ENCODE measurements at regions of chr7 and their contacts with region 1.

Region 1: DNA sequence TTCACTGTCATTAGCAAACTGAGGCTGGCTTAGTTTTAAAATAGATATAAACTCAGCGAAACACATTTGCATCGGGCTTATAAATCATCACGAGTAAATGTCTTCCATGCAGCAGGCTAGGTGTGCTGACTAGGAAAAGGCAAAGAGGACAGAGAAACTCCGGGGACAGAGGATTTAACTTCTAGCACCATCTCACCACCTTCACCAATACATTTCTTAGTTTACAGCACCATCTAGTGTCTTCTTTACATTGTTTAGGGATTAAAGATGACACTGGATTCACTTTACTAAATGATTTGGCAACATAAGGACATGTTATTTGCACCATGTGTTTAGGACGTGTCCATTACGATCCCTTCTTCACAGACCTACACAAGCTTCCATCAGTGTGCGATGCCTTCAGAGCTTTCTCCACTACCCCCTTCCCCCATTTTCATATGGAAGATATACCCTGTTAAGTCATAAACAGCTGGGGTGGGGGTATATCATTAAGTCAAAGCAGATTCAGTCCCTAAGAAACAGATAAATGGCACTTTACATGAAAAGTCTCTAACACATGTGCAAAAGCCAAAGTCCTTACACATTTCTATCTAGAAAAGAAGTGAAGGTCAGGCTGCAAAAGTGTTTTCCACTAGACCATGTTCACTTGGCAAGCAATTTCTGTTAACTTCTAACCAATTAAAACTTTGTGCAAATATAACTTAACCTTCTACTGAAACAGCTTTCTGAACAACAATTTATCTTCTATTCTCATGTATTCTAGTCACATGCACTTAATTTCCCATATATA is 103.3 kb downstream of the GRB10 start:
- DNase-seq: no peak
- ATAC-seq: peak; percentile 85 to 88
- H3K4me3 ChIP-seq: no peak overlapping the region
- H3K27ac ChIP-seq: peak overlapping the region; percentile 73 to 97 (median 84)
- H3K4me1 ChIP-seq: peaks cover 73 to 79% of the 10 kb centered on the region in 2 donors
- H3K27me3 ChIP-seq: no peaks in the 10 kb centered on the region
- CTCF ChIP-seq: peak; percentile 41 to 68 (median 48)
- POLR2A ChIP-seq: peak; percentile 16 to 44

Region 2: DNA sequence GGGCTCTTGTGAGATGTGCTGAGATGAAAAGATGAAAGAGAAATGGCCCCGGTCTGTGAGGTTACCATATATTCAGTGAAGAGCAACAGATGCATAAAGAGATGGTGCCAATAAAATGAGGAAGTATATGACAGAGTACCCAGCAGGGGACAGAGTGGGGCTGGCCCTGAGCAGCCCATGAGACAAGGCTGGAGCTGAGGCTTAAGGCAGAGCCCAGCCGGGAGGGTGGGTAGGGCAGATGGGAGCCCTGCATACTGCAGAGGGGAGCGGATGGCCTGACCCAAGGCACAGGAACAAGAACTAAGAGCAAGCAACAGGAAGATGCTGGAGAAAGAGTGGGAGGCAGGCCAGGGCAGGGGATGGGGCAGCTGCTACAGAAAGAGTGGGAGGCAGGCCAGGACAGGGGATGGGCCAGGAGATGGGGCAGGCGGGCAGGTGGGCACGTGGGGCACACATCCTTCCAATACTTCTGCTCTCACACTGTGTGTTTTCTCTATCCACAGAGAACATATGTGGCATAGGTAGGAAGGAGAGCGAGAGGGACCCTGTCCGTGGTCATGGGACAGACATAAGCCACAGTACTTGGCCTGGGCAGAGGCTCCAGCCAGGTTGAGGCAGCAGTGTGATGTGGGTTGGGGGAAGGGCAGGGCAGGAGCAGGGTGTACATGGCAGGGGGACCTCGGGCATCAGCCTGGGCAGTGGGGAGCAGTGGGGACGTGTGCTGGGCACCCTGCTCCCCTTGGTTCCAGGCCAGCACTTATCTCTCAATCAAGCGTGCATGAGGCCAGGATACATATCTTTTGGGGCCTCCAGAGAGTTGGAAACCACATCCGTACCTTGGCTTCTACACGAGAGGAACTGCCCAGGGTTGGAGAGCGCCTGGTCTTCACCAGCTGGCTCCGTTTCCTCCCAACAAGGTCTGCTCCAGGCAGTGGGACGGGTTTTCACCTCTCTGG is 466.5 kb before region 1 on chr7:
- in situ Hi-C with region 1: loop called in 2 of 4 experiments (anchors 10 to 25 kb)
- intact Hi-C with region 1: no loop called
- DNase-seq: no peak
- ATAC-seq: no peak
- H3K4me3 ChIP-seq: no peak overlapping the region
- H3K27ac ChIP-seq: no peak overlapping the region
- H3K4me1 ChIP-seq: no peaks in the 10 kb centered on the region
- H3K27me3 ChIP-seq: no peaks in the 10 kb centered on the region
- CTCF ChIP-seq: no peak
- POLR2A ChIP-seq: no peak

Region 3: GRCh38 chr7:50641442-50642405 is 37.7 kb before region 1 on chr7:
- in situ Hi-C with region 1: no loop called
- intact Hi-C with region 1: loop called (anchors 1 kb)
- DNase-seq: peak; percentile 63 to 83
- ATAC-seq: peak; percentile 83 to 90
- H3K4me3 ChIP-seq: peak overlapping the region in 2 of 4 donors; percentile 57 to 63
- H3K27ac ChIP-seq: peak overlapping the region; percentile 43 to 95 (median 88)
- H3K4me1 ChIP-seq: peaks cover 15 to 29% of the 10 kb centered on the region in 2 donors
- H3K27me3 ChIP-seq: no peaks in the 10 kb centered on the region
- CTCF ChIP-seq: peak in 2 of 5 experiments; percentile 35 to 45
- POLR2A ChIP-seq: peak; percentile 88

Region 4: DNA sequence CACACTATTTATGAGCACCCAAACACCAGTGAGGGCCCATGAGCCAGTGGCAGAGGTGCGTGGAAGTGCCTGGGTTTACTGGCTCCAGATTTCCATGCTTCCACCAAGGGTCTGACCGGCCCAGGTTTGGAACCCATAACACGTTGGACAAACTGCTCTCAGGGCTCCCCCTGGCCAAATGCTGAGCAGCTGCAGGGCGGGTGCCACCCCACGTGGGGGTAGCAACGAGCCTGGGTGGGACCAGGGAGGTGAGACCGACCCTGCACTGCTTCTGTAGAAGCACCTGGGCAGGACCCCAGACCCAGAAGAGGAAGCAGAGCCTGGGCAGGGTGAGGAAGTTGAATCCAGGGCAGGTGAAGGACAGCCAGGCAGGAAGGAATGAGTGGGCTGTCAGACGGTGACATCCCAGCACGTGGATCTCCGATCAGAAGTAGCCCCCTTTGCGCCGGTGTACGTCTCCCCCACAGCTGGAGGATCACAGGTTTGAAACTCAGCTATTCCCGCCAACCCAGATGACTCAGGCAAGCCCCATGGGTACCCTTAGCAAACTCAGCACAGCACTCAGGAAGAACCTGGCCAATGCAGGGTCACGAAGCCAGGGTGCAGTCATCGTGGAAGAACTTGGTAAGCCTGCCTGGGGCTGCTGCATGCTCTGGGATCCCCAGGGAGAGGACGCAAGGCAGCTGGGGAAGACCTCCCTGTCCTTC is 13.8 kb before region 1 on chr7:
- in situ Hi-C with region 1: no loop called
- intact Hi-C with region 1: loop called (anchors 1 kb)
- DNase-seq: peak in 1 of 2 donors; percentile 62
- ATAC-seq: no peak
- H3K4me3 ChIP-seq: no peak overlapping the region
- H3K27ac ChIP-seq: peak overlapping the region; percentile 85 to 97 (median 92)
- H3K4me1 ChIP-seq: peaks cover 80 to 89% of the 10 kb centered on the region in 2 donors
- H3K27me3 ChIP-seq: no peaks in the 10 kb centered on the region
- CTCF ChIP-seq: no peak
- POLR2A ChIP-seq: no peak